Right ventricle myocardium superior (tissue), 1 donor: ENCODE measurements at regions of chr1 and their contacts with region 1.

Region 1: GRCh38 chr1:56374026-56374974 is 205.1 kb downstream of the PLPP3 start:
- DNase-seq: peak; percentile 56
- ATAC-seq: peak; percentile 80

Region 2: GRCh38 chr1:56329956-56330355 is 44.3 kb before region 1 on chr1:
- intact Hi-C with region 1: loop called (anchors 5 kb)
- DNase-seq: no peak
- ATAC-seq: no peak

Region 3: DNA sequence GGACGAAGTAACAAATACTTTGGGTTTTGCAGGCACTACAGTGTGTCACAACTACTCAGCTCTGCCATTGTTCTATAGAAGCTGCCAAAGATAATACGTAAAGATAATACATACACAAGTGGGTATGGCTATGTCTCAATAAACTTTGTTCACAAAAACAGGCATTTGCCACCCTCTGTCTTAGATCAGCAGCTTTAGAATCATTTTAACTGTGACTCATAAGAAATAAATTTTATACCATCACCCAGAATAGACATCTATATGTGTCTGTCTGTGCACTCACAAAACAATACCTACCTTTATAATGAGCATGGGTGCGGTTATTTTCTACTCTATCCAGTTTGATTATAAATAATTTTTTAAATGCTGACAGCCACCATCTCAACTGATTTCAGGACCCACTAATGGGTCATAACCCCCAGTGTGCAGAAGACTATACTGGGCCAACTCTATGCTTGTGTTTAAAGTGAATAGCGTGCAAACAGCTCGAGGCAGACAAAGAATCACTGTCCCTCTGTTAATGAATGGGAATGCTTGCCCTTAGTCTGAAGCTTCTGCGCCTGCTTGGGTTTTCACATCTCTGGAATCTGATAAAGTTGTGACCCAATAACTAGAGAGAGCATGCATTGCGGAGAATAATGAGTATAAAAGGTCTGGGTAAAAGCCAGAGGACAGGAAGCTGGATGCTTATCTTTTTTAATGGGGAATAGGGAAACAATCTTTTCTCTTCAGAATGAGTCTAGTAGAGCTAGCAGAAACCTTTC is 11.1 kb before region 1 on chr1:
- intact Hi-C with region 1: no loop called
- DNase-seq: no peak
- ATAC-seq: no peak

Region 4: GRCh38 chr1:56502700-56503245 is 128.5 kb after region 1 on chr1:
- intact Hi-C with region 1: no loop called
- DNase-seq: no peak
- ATAC-seq: peak; percentile 24

Region 5: GRCh38 chr1:56585985-56586384 is 211.7 kb after region 1 on chr1:
- intact Hi-C with region 1: no loop called
- DNase-seq: no peak
- ATAC-seq: no peak